ENCODE measurements at regions of chr20 and their contacts with region 1.

Region 1: GRCh38 chr20:31630187-31630790 is 7.4 kb upstream of the COX4I2 start:
- DNase-seq: no peak
- H3K4me3 ChIP-seq: no peak overlapping the region
- H3K27ac ChIP-seq: no peak overlapping the region
- H3K4me1 ChIP-seq: no peaks in the 10 kb centered on the region
- H3K27me3 ChIP-seq: no peaks in the 10 kb centered on the region
- CTCF ChIP-seq: no peak

Region 2: GRCh38 chr20:31617432-31618104 is 12.7 kb before region 1 on chr20:
- CTCF ChIA-PET with region 1: interaction called, 23 read pairs
- POLR2A ChIA-PET with region 1: no interaction called
- intact Hi-C with region 1: no loop called
- DNase-seq: no peak
- H3K4me3 ChIP-seq: no peak overlapping the region
- H3K27ac ChIP-seq: no peak overlapping the region
- H3K4me1 ChIP-seq: peaks cover 1% of the 10 kb centered on the region
- H3K27me3 ChIP-seq: no peaks in the 10 kb centered on the region
- CTCF ChIP-seq: no peak

Region 3: DNA sequence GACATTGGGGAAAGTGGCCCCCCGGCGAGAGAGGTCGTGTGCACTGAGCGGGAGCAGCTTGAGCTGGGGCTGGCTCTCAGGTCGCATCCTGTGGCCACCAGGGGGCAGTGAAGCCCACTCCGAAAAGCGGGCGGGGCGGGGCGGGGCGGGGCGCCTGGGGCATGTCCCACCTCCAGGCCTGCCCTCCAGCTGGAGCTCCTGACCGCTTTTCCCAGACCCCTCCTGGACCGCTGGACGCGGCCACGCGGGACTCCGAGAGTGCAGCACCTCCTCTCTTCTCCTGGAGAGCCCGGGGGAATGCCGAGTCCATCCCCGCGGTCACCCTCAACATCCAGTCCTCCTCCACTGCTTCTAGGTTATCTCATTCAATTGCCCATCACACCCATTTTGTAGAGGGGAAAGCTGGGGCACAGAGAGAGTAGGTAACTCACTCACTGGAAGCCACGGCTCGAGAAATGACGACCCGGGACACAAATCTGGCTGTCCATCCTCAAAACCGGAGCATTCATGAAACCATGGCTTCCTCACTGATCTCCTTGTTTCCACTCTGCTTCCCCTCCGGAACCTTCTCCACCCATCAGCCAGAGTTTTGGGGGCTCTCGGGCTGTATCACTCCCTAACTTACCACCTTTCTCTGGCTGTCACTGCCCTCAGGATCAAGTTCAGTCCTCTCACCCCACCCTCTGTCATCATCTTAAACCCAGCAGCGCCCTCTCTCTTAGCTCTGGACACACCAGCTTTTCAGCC is 31.5 kb after region 1 on chr20:
- CTCF ChIA-PET with region 1: interaction called, 11 read pairs
- POLR2A ChIA-PET with region 1: no interaction called
- intact Hi-C with region 1: no loop called
- DNase-seq: peak in 1 of 2 experiments; percentile 73
- H3K4me3 ChIP-seq: no peak overlapping the region; the same call in 1 of the 2 replicates
- H3K27ac ChIP-seq: peak overlapping the region; percentile 30
- H3K4me1 ChIP-seq: peaks cover 47% of the 10 kb centered on the region
- H3K27me3 ChIP-seq: no peaks in the 10 kb centered on the region
- CTCF ChIP-seq: peak; percentile 79

Region 4: GRCh38 chr20:31674895-31675827 is 44.9 kb after region 1 on chr20:
- CTCF ChIA-PET with region 1: interaction called, 5 read pairs
- POLR2A ChIA-PET with region 1: no interaction called
- intact Hi-C with region 1: loop called (anchors 1 kb)
- DNase-seq: peak in 1 of 2 experiments; percentile 53
- H3K4me3 ChIP-seq: no peak overlapping the region
- H3K27ac ChIP-seq: peak overlapping the region; percentile 24; the same call in 1 of the 2 replicates
- H3K4me1 ChIP-seq: peaks cover 27% of the 10 kb centered on the region
- H3K27me3 ChIP-seq: no peaks in the 10 kb centered on the region
- CTCF ChIP-seq: no peak

Region 5: GRCh38 chr20:31704225-31705119 is 74.2 kb after region 1 on chr20:
- CTCF ChIA-PET with region 1: interaction called, 10 read pairs
- POLR2A ChIA-PET with region 1: no interaction called
- intact Hi-C with region 1: no loop called
- DNase-seq: peak; percentile 92 to 98
- H3K4me3 ChIP-seq: peak overlapping the region; percentile 29; the same call in 1 of the 2 replicates
- H3K27ac ChIP-seq: peak overlapping the region; percentile 95
- H3K4me1 ChIP-seq: peaks cover 90% of the 10 kb centered on the region
- H3K27me3 ChIP-seq: no peaks in the 10 kb centered on the region
- CTCF ChIP-seq: no peak

Region 6: GRCh38 chr20:31751126-31751525 is 120.8 kb after region 1 on chr20:
- CTCF ChIA-PET with region 1: interaction called, 10 read pairs
- POLR2A ChIA-PET with region 1: no interaction called
- intact Hi-C with region 1: no loop called
- DNase-seq: no peak
- H3K4me3 ChIP-seq: no peak overlapping the region
- H3K27ac ChIP-seq: no peak overlapping the region
- H3K4me1 ChIP-seq: no peaks in the 10 kb centered on the region
- H3K27me3 ChIP-seq: no peaks in the 10 kb centered on the region
- CTCF ChIP-seq: no peak

Region 7: DNA sequence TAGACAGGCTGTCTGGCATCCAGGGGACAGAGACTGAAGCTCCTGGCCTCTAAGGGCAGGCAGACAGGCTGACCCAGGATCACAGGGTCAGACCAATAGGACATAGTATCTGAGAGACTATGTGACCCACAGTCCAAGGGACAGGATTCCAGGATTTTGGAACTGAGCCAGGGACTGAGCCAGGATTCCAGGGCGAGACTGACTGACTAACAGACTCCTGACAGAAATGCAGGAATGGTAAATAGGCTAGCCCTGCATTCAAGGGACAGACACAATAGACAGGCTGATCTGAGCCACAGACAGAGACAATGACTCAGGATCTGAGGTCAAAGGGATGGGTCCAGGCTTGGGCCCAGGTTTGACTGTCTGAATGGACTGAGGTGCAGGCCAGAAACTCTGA is 357.5 kb after region 1 on chr20:
- CTCF ChIA-PET with region 1: no interaction called
- POLR2A ChIA-PET with region 1: no interaction called
- intact Hi-C with region 1: no loop called
- DNase-seq: no peak
- H3K4me3 ChIP-seq: no peak overlapping the region
- H3K27ac ChIP-seq: no peak overlapping the region
- H3K4me1 ChIP-seq: no peaks in the 10 kb centered on the region
- H3K27me3 ChIP-seq: peaks cover 34% of the 10 kb centered on the region
- CTCF ChIP-seq: no peak